T-cell (primary cell): ENCODE measurements at regions of chr11 and their contacts with region 1.

Region 1: GRCh38 chr11:41281131-41281742 is 178.2 kb downstream of the LRRC4C start:
- DNase-seq: no peak
- ATAC-seq: no peak
- H3K4me3 ChIP-seq: no peak overlapping the region
- H3K4me3 Mint-ChIP-seq: no peak overlapping the region
- H3K27ac ChIP-seq: no peak overlapping the region
- H3K27ac Mint-ChIP-seq: no peak overlapping the region
- H3K4me1 ChIP-seq: no peaks in the 10 kb centered on the region
- H3K4me1 Mint-ChIP-seq: no peaks in the 10 kb centered on the region
- H3K27me3 ChIP-seq: no peaks in the 10 kb centered on the region
- H3K27me3 Mint-ChIP-seq: no peaks in the 10 kb centered on the region

Region 2: GRCh38 chr11:41102471-41102870 is 178.8 kb before region 1 on chr11:
- CTCF ChIA-PET with region 1: no interaction called
- POLR2A ChIA-PET with region 1: no interaction called
- DNase-seq: no peak
- ATAC-seq: no peak
- H3K4me3 ChIP-seq: no peak overlapping the region
- H3K4me3 Mint-ChIP-seq: no peak overlapping the region
- H3K27ac ChIP-seq: no peak overlapping the region
- H3K27ac Mint-ChIP-seq: no peak overlapping the region
- H3K4me1 ChIP-seq: no peaks in the 10 kb centered on the region
- H3K4me1 Mint-ChIP-seq: no peaks in the 10 kb centered on the region
- H3K27me3 ChIP-seq: no peaks in the 10 kb centered on the region
- H3K27me3 Mint-ChIP-seq: no peaks in the 10 kb centered on the region

Region 3: GRCh38 chr11:41254966-41255365 is 26.3 kb before region 1 on chr11:
- CTCF ChIA-PET with region 1: no interaction called
- POLR2A ChIA-PET with region 1: no interaction called
- DNase-seq: no peak
- ATAC-seq: no peak
- H3K4me3 ChIP-seq: no peak overlapping the region
- H3K4me3 Mint-ChIP-seq: no peak overlapping the region
- H3K27ac ChIP-seq: no peak overlapping the region
- H3K27ac Mint-ChIP-seq: no peak overlapping the region
- H3K4me1 ChIP-seq: no peaks in the 10 kb centered on the region
- H3K4me1 Mint-ChIP-seq: no peaks in the 10 kb centered on the region
- H3K27me3 ChIP-seq: no peaks in the 10 kb centered on the region
- H3K27me3 Mint-ChIP-seq: no peaks in the 10 kb centered on the region

Region 4: DNA sequence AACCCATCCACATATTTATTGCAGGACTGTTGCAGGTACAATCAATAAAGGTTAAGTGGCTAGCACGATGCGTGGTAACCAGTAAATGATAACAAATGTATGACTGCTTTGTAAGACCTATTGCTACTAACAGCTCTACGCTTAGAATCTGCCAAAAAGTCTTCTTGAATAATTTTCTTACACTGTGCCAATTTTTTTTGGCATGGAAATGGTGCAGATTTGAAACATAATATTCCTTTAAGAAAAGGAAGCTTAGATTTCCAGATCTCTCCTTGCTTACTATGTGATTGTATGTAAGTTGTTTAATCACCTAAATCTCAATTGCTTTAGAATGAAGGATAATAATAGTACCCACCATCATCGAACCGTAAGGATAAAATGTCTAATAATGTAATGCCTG is 13.8 kb before region 1 on chr11:
- CTCF ChIA-PET with region 1: interaction called in 1 of 2 experiments, 11 read pairs
- POLR2A ChIA-PET with region 1: no interaction called
- DNase-seq: no peak
- ATAC-seq: no peak
- H3K4me3 ChIP-seq: no peak overlapping the region
- H3K4me3 Mint-ChIP-seq: no peak overlapping the region
- H3K27ac ChIP-seq: no peak overlapping the region
- H3K27ac Mint-ChIP-seq: no peak overlapping the region
- H3K4me1 ChIP-seq: no peaks in the 10 kb centered on the region
- H3K4me1 Mint-ChIP-seq: no peaks in the 10 kb centered on the region
- H3K27me3 ChIP-seq: no peaks in the 10 kb centered on the region
- H3K27me3 Mint-ChIP-seq: no peaks in the 10 kb centered on the region

Region 5: DNA sequence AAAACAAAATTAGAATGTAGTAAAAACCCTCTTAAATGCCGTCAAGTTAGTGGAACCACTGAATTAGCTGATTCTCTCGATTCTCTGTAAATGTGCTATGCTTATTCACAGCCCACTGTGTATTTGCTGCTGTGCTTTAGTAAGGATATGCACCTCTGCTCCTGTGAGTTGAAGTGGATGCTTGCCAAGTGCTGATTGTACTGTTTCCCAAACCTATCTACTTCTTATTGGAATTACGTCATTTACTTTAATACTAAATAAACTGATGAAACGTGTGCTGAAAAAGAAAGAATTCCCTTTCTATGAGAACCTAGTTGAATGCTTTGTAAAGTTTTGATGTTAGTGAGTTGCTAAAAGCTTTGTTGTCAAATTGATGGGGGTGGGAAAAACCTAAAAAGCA is 19.8 kb after region 1 on chr11:
- CTCF ChIA-PET with region 1: no interaction called
- POLR2A ChIA-PET with region 1: no interaction called
- DNase-seq: no peak
- ATAC-seq: no peak
- H3K4me3 ChIP-seq: no peak overlapping the region
- H3K4me3 Mint-ChIP-seq: no peak overlapping the region
- H3K27ac ChIP-seq: no peak overlapping the region
- H3K27ac Mint-ChIP-seq: no peak overlapping the region
- H3K4me1 ChIP-seq: no peaks in the 10 kb centered on the region
- H3K4me1 Mint-ChIP-seq: no peaks in the 10 kb centered on the region
- H3K27me3 ChIP-seq: no peaks in the 10 kb centered on the region
- H3K27me3 Mint-ChIP-seq: no peaks in the 10 kb centered on the region

Region 6: GRCh38 chr11:41659970-41660369 is 378.7 kb after region 1 on chr11:
- CTCF ChIA-PET with region 1: no interaction called
- POLR2A ChIA-PET with region 1: no interaction called
- DNase-seq: no peak
- ATAC-seq: no peak
- H3K4me3 ChIP-seq: no peak overlapping the region
- H3K4me3 Mint-ChIP-seq: no peak overlapping the region
- H3K27ac ChIP-seq: no peak overlapping the region
- H3K27ac Mint-ChIP-seq: no peak overlapping the region
- H3K4me1 ChIP-seq: no peaks in the 10 kb centered on the region
- H3K4me1 Mint-ChIP-seq: no peaks in the 10 kb centered on the region
- H3K27me3 ChIP-seq: no peaks in the 10 kb centered on the region
- H3K27me3 Mint-ChIP-seq: no peaks in the 10 kb centered on the region